Caco-2 (cell line): ENCODE measurements at regions of chr4 and their contacts with region 1.

Region 1: DNA sequence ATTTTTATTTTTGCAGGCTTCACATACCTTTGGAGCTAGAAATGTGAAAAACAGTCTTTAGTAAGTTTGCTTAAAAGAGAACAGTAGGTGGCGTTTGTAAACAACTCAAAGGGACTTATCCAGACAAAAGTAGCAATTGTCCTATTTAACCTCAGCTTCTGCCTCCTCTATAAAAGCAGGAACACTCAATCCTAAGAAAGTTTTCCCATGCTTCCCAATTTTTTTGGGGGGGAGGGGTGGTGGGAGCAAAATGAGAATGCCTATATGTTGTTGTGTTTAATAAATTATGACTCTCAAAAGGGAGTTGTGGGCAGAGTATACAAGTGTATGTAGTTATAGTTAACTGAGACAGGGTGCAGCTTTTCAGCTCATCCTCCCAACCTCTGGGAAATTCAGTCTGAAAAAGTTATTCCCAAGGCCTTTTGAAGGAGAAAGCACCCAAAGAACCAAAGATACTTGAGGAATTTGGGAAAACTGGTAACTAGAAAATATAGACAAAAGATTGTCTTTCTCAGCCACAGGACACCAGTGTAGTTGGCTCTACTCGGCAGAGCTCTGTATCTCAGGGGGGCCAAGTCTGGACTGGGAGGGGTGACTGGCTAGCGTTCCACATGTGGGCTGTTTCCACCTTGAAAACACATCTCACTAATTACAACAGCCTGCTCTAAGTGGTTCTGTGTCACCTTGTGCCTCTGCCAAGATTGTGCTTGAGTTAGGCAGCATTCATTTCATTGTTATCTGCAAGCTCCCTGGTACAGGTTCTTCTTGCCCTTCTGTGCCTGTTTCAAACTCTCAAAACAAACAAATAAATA is 2.8 kb downstream of the SFRP2 start:
- DNase-seq: no peak
- H3K4me3 ChIP-seq: no peak overlapping the region
- H3K4me3 Mint-ChIP-seq: no peak overlapping the region
- H3K27ac Mint-ChIP-seq: no peak overlapping the region
- H3K4me1 ChIP-seq: no peaks in the 10 kb centered on the region
- H3K4me1 Mint-ChIP-seq: no peaks in the 10 kb centered on the region
- H3K27me3 ChIP-seq: no peaks in the 10 kb centered on the region
- H3K27me3 Mint-ChIP-seq: peaks cover 10% of the 10 kb centered on the region
- CTCF ChIP-seq: peak; percentile 30 to 37

Region 2: DNA sequence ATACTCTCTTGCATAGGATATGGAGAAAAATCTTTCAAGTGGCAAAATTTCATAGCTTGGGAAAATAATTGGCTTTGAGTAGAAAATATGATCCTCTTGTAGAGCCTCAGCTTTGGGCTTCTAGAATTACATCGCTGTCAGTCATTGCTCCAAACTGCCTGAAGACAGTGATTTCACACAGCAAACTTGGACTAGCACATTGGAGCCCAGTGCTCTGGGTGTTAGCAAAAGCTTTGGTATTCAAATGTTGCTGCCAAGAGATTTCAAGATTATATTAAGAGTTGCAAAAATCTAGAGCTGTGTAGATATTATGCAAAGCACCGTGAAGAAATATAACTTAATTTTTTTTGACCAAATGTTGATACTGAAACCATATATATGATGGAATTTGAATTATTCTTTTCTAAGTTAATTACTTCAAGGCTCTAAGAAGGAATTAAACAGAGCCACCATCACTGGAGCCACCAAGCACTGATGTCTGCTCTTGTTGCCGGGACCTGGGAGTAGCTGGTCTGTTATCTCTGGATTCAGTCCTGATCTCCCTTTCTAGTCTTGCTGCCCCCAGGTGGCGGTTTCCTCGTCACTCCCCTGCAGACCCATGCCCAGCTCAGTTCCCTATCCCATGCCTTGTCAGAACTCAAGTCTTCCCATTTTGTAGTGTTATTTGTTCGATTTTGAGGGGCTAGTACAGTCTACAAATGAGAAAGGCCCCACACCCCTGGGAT is 263.5 kb after region 1 on chr4:
- CTCF ChIA-PET with region 1: interaction called, 15 read pairs
- POLR2A ChIA-PET with region 1: no interaction called
- intact Hi-C with region 1: loop called (anchors 1 kb)
- DNase-seq: peak; percentile 37 to 38
- H3K4me3 ChIP-seq: no peak overlapping the region
- H3K4me3 Mint-ChIP-seq: no peak overlapping the region
- H3K27ac Mint-ChIP-seq: no peak overlapping the region
- H3K4me1 ChIP-seq: no peaks in the 10 kb centered on the region
- H3K4me1 Mint-ChIP-seq: no peaks in the 10 kb centered on the region
- H3K27me3 ChIP-seq: no peaks in the 10 kb centered on the region
- H3K27me3 Mint-ChIP-seq: peaks cover 4% of the 10 kb centered on the region
- CTCF ChIP-seq: peak; percentile 24 to 36

Region 3: DNA sequence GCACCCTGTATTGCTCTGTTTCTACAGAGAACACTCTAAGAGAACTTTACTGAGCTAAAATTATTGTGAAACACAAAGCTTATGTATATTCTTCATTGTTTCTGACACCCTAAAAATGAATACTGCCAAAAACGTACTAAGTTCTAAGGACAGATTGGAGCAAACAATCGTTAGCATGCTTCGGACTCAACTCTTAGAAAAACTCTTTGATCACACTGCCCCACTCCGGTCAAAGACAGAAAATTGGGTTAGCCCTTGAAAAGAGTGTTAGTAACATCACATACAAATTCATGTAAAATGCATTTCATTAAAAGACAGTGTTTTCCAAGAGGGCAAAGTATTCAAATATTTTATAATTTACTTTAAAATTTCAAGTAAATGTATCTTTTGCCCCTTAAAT is 528.1 kb after region 1 on chr4:
- CTCF ChIA-PET with region 1: no interaction called
- POLR2A ChIA-PET with region 1: no interaction called
- intact Hi-C with region 1: loop called (anchors 5 kb)
- DNase-seq: peak in 1 of 2 experiments; percentile 19
- H3K4me3 ChIP-seq: no peak overlapping the region
- H3K4me3 Mint-ChIP-seq: no peak overlapping the region
- H3K27ac Mint-ChIP-seq: no peak overlapping the region
- H3K4me1 ChIP-seq: no peaks in the 10 kb centered on the region
- H3K4me1 Mint-ChIP-seq: no peaks in the 10 kb centered on the region
- H3K27me3 ChIP-seq: no peaks in the 10 kb centered on the region
- H3K27me3 Mint-ChIP-seq: peaks cover 6% of the 10 kb centered on the region
- CTCF ChIP-seq: peak in 1 of 2 experiments; percentile 40

Region 4: DNA sequence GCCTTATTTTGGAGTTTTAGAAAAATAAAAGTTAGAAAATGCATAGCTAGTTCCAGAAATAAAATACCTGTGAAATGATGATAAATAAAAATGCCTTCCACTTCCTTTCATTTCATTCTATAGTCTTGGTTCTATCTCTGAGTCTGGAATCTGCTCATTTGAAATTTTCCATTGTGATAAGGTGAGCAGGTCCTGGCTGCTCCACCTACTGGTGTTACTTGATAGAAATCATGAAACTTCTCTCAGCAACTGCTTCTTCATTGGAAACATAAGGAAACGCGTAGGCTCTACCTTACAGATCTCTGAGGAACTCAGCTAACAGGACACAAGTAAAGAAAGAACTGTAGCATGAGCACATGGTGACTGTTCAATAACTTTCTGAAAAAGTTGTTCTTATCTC is 563.7 kb after region 1 on chr4:
- CTCF ChIA-PET with region 1: interaction called, 11 read pairs
- POLR2A ChIA-PET with region 1: no interaction called
- intact Hi-C with region 1: no loop called
- DNase-seq: peak in 1 of 2 experiments; percentile 12
- H3K4me3 ChIP-seq: no peak overlapping the region
- H3K4me3 Mint-ChIP-seq: no peak overlapping the region
- H3K27ac Mint-ChIP-seq: no peak overlapping the region
- H3K4me1 ChIP-seq: no peaks in the 10 kb centered on the region
- H3K4me1 Mint-ChIP-seq: no peaks in the 10 kb centered on the region
- H3K27me3 ChIP-seq: no peaks in the 10 kb centered on the region
- H3K27me3 Mint-ChIP-seq: peaks cover 2% of the 10 kb centered on the region
- CTCF ChIP-seq: peak in 1 of 2 experiments; percentile 60